Panc1 (cell line): ENCODE measurements at regions of chr7 and their contacts with region 1.

Region 1: GRCh38 chr7:94781236-94781635 is 125.3 kb upstream of the SGCE start:
- DNase-seq: no peak
- ATAC-seq: no peak
- H3K4me3 ChIP-seq: no peak overlapping the region
- H3K27ac ChIP-seq: no peak overlapping the region
- H3K4me1 ChIP-seq: no peaks in the 10 kb centered on the region
- H3K27me3 ChIP-seq: no peaks in the 10 kb centered on the region
- CTCF ChIP-seq: no peak

Region 2: GRCh38 chr7:94877731-94878670 is 96.8 kb after region 1 on chr7:
- CTCF ChIA-PET with region 1: no interaction called
- POLR2A ChIA-PET with region 1: no interaction called
- in situ Hi-C with region 1: no loop called
- intact Hi-C with region 1: no loop called
- DNase-seq: no peak
- ATAC-seq: no peak
- H3K4me3 ChIP-seq: no peak overlapping the region
- H3K27ac ChIP-seq: no peak overlapping the region
- H3K4me1 ChIP-seq: no peaks in the 10 kb centered on the region
- H3K27me3 ChIP-seq: no peaks in the 10 kb centered on the region
- CTCF ChIP-seq: no peak

Region 3: GRCh38 chr7:95190515-95190914 is 409.3 kb after region 1 on chr7:
- CTCF ChIA-PET with region 1: no interaction called
- POLR2A ChIA-PET with region 1: no interaction called
- in situ Hi-C with region 1: no loop called
- intact Hi-C with region 1: loop called (anchors 5 kb)
- DNase-seq: no peak
- ATAC-seq: no peak
- H3K4me3 ChIP-seq: no peak overlapping the region
- H3K27ac ChIP-seq: no peak overlapping the region
- H3K4me1 ChIP-seq: no peaks in the 10 kb centered on the region
- H3K27me3 ChIP-seq: no peaks in the 10 kb centered on the region
- CTCF ChIP-seq: peak; percentile 27